Activated CD8-positive, alpha-beta T cell treated with anti-CD3 and anti-CD28 coated beads, Interleukin-2, amount 10 ng/mL, durations not matched to agents 7 days and 5 days (primary cell): ENCODE measurements at regions of chr6 and their contacts with region 1.

Region 1: GRCh38 chr6:107704347-107705013 is 119.6 kb downstream of the SCML4 start:
- DNase-seq: peak; percentile 56
- ATAC-seq: no peak
- H3K4me3 Mint-ChIP-seq: no peak overlapping the region
- H3K27ac Mint-ChIP-seq: no peak overlapping the region
- H3K4me1 Mint-ChIP-seq: peaks cover 19% of the 10 kb centered on the region
- H3K27me3 Mint-ChIP-seq: no peaks in the 10 kb centered on the region

Region 2: GRCh38 chr6:107691062-107691751 is 13.3 kb before region 1 on chr6:
- CTCF ChIA-PET with region 1: interaction called, 11 read pairs
- POLR2A ChIA-PET with region 1: no interaction called
- DNase-seq: no peak
- ATAC-seq: no peak
- H3K4me3 Mint-ChIP-seq: no peak overlapping the region
- H3K27ac Mint-ChIP-seq: no peak overlapping the region
- H3K4me1 Mint-ChIP-seq: no peaks in the 10 kb centered on the region
- H3K27me3 Mint-ChIP-seq: no peaks in the 10 kb centered on the region

Region 3: GRCh38 chr6:107931894-107932293 is 227.4 kb after region 1 on chr6:
- CTCF ChIA-PET with region 1: no interaction called
- POLR2A ChIA-PET with region 1: no interaction called
- DNase-seq: no peak
- ATAC-seq: no peak
- H3K4me3 Mint-ChIP-seq: no peak overlapping the region
- H3K27ac Mint-ChIP-seq: no peak overlapping the region
- H3K4me1 Mint-ChIP-seq: peaks cover 6% of the 10 kb centered on the region
- H3K27me3 Mint-ChIP-seq: no peaks in the 10 kb centered on the region